OCI-LY7 (cell line): ENCODE measurements at regions of chr12 and their contacts with region 1.

Region 1: GRCh38 chr12:59620326-59620725 is 24.5 kb downstream of the SLC16A7 start:
- DNase-seq: no peak
- H3K4me3 ChIP-seq: no peak overlapping the region
- H3K27ac ChIP-seq: no peak overlapping the region
- H3K4me1 ChIP-seq: no peaks in the 10 kb centered on the region
- CTCF ChIP-seq: no peak

Region 2: GRCh38 chr12:59632408-59632807 is 12.1 kb after region 1 on chr12:
- CTCF ChIA-PET with region 1: no interaction called
- POLR2A ChIA-PET with region 1: interaction called, 11 read pairs
- intact Hi-C with region 1: no loop called
- DNase-seq: no peak
- H3K4me3 ChIP-seq: no peak overlapping the region
- H3K27ac ChIP-seq: no peak overlapping the region
- H3K4me1 ChIP-seq: no peaks in the 10 kb centered on the region
- CTCF ChIP-seq: no peak

Region 3: GRCh38 chr12:59736822-59737221 is 116.5 kb after region 1 on chr12:
- CTCF ChIA-PET with region 1: no interaction called
- POLR2A ChIA-PET with region 1: no interaction called
- intact Hi-C with region 1: no loop called
- DNase-seq: no peak
- H3K4me3 ChIP-seq: no peak overlapping the region
- H3K27ac ChIP-seq: no peak overlapping the region
- H3K4me1 ChIP-seq: no peaks in the 10 kb centered on the region
- CTCF ChIP-seq: no peak